ENCODE measurements at regions of chr2 and their contacts with region 1.

Region 1: DNA sequence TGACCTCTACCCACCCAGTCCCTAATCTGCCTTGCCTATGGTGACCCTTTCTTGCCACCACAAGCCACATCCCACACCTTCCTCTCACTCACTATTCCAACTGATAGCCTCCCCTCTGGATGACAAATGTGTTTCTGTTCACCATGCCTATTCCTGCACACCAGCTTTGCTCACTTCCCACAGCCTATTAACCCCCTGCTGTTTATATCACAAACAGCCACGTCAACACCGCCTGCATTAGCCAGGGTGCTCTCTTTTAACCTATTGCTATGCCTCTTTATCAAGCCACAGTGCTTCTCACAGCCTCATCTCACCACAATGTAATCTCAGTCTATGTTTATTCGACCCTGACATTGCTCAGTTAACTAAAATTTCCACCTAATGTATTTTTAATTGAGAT is 271.8 kb downstream of the SUCLG1 start:
- DNase-seq: no peak
- H3K4me3 ChIP-seq: no peak overlapping the region
- H3K27me3 ChIP-seq: no peaks in the 10 kb centered on the region
- CTCF ChIP-seq: no peak

Region 2: DNA sequence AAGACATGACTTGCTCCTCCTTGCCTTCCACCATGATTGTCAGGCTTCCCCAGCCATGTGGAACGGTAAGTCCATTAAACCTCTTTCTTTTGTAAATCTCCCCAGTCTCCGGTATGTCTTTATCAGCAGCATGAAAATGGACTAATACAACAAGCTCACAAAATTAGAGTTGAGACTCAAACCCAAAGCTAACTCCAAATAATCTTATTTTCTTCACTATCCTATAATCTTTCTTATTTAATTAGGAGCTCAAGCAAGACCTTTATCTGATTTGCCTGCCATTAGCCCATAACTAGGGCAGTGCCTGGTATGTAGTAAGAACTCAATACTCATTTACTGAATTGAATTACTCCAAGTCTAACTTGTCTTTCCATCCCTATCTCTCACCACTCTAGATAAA is 17.4 kb before region 1 on chr2:
- CTCF ChIA-PET with region 1: no interaction called
- POLR2A ChIA-PET with region 1: interaction called, 14 read pairs
- DNase-seq: no peak
- H3K4me3 ChIP-seq: no peak overlapping the region
- H3K27me3 ChIP-seq: no peaks in the 10 kb centered on the region
- CTCF ChIP-seq: no peak

Measured in BJ (cell line).